ENCODE measurements at regions of chr1 and their contacts with region 1.

Region 1: GRCh38 chr1:62439652-62440371 is 3.0 kb downstream of the USP1 start:
- DNase-seq: no peak
- H3K4me3 ChIP-seq: no peak overlapping the region
- H3K27ac ChIP-seq: no peak overlapping the region
- H3K27me3 ChIP-seq: no peaks in the 10 kb centered on the region
- CTCF ChIP-seq: no peak

Region 2: GRCh38 chr1:62424411-62424810 is 15.4 kb before region 1 on chr1:
- CTCF ChIA-PET with region 1: no interaction called
- POLR2A ChIA-PET with region 1: no interaction called
- DNase-seq: no peak
- H3K4me3 ChIP-seq: no peak overlapping the region
- H3K27ac ChIP-seq: no peak overlapping the region
- H3K27me3 ChIP-seq: no peaks in the 10 kb centered on the region
- CTCF ChIP-seq: no peak

Region 3: GRCh38 chr1:62452951-62453350 is 13.1 kb after region 1 on chr1:
- CTCF ChIA-PET with region 1: no interaction called
- POLR2A ChIA-PET with region 1: interaction called, 10 read pairs
- DNase-seq: no peak
- H3K4me3 ChIP-seq: no peak overlapping the region
- H3K27ac ChIP-seq: no peak overlapping the region
- H3K27me3 ChIP-seq: no peaks in the 10 kb centered on the region
- CTCF ChIP-seq: no peak

Measured in AG04450 (cell line).